Activated CD8-positive, alpha-beta T cell treated with anti-CD3 and anti-CD28 coated beads, Interleukin-2, amount 10 ng/mL, durations not matched to agents 7 days and 5 days (primary cell): ENCODE measurements at regions of chr18 and their contacts with region 1.

Region 1: DNA sequence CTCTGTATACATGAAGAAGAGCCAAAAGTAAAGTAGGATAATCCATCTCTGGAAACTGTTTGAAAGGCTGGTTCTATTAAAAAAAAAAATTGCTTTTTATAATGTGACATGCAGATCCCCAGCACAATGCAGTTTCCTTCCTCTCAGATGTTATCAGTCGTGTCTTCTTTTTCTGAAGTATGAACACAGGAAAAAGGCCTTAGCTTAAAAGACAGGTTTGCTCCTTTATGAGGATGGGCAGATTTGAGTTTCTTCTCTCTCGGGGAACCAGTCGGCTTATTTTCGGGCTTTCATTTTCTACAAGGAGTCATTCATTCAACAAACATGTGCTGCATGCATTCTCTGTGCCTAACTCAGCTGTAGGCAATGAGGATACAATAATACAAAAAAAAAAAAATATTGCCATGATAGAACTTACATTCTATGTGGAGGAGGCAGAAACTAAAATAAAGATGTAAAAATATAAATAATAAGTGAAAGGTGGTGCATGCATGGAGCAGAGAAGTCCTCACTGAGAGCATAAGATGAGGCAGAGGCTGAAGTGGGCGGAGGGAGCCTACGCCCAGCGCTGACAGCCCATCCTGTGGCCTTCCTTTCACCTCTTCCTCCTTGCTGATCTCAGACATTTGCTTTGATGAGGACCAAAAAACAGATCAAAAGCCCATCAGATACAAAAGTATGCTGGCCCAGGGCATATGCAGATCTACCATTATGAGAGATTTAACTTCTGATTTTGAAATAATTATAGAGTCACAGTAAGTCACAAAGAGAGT is at the start of gene CD226:
- DNase-seq: peak; percentile 67
- ATAC-seq: peak; percentile 74
- H3K4me3 Mint-ChIP-seq: no peak within 1 kb of the TSS
- H3K27ac Mint-ChIP-seq: no peak within 1 kb of the TSS
- H3K4me1 Mint-ChIP-seq: peaks cover 45% of the 10 kb centered on the region
- H3K27me3 Mint-ChIP-seq: no peaks in the 10 kb centered on the region
- total RNA-seq, gene CD226: 47.6 to 52.2 TPM

Region 2: GRCh38 chr18:69752737-69753380 is 194.7 kb before region 1 on chr18:
- CTCF ChIA-PET with region 1: no interaction called
- POLR2A ChIA-PET with region 1: no interaction called
- DNase-seq: no peak
- ATAC-seq: no peak
- H3K4me3 Mint-ChIP-seq: no peak overlapping the region
- H3K27ac Mint-ChIP-seq: no peak overlapping the region
- H3K4me1 Mint-ChIP-seq: peaks cover 26% of the 10 kb centered on the region
- H3K27me3 Mint-ChIP-seq: no peaks in the 10 kb centered on the region

Region 3: DNA sequence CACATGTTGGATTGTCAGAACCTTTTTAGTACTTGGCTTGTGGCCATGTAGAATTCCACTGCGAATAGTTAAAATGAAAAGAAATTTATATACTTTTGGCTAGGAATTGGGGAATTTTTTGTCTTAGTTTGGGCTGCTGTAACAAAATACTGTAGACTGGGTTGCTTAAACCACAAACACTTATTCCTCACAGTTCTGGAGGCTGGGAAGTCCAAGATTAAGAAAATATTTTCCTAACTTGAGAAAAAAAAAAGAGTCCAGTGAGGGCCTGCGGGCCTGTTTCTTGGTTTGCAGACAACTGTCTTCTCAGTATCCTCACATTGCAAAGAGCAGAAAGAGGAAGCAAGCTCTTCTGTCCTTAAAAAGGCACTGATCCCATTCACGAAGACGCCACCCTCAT is 81.8 kb before region 1 on chr18:
- CTCF ChIA-PET with region 1: no interaction called
- POLR2A ChIA-PET with region 1: no interaction called
- DNase-seq: no peak
- ATAC-seq: no peak
- H3K4me3 Mint-ChIP-seq: no peak overlapping the region
- H3K27ac Mint-ChIP-seq: no peak overlapping the region
- H3K4me1 Mint-ChIP-seq: no peaks in the 10 kb centered on the region
- H3K27me3 Mint-ChIP-seq: no peaks in the 10 kb centered on the region

Region 4: GRCh38 chr18:69958422-69958821 is 10.9 kb after region 1 on chr18:
- CTCF ChIA-PET with region 1: interaction called, 13 read pairs
- POLR2A ChIA-PET with region 1: interaction called, 21 read pairs
- DNase-seq: no peak
- ATAC-seq: no peak
- H3K4me3 Mint-ChIP-seq: peak overlapping the region; percentile 3
- H3K27ac Mint-ChIP-seq: peak overlapping the region; percentile 50
- H3K4me1 Mint-ChIP-seq: peaks cover 25% of the 10 kb centered on the region
- H3K27me3 Mint-ChIP-seq: no peaks in the 10 kb centered on the region